Endothelial cell of umbilical vein (primary cell): ENCODE measurements at regions of chr16 and their contacts with region 1.

Region 1: GRCh38 chr16:1983544-1984346 is at the start of gene GFER:
- DNase-seq: peak; percentile 93
- H3K4me3 ChIP-seq: peak within 1 kb of the TSS; percentile 51 to 75 (median 71)
- H3K27ac ChIP-seq: no peak within 1 kb of the TSS
- H3K4me1 ChIP-seq: peaks cover 15% of the 10 kb centered on the region
- H3K27me3 ChIP-seq: peaks cover 37 to 41% of the 10 kb centered on the region in 2 experiments
- CTCF ChIP-seq: peak; percentile 18 to 54
- POLR2A ChIP-seq: peak; percentile 90
- total RNA-seq, gene GFER: 29.9 and 30.5 TPM in 2 replicates

Region 2: DNA sequence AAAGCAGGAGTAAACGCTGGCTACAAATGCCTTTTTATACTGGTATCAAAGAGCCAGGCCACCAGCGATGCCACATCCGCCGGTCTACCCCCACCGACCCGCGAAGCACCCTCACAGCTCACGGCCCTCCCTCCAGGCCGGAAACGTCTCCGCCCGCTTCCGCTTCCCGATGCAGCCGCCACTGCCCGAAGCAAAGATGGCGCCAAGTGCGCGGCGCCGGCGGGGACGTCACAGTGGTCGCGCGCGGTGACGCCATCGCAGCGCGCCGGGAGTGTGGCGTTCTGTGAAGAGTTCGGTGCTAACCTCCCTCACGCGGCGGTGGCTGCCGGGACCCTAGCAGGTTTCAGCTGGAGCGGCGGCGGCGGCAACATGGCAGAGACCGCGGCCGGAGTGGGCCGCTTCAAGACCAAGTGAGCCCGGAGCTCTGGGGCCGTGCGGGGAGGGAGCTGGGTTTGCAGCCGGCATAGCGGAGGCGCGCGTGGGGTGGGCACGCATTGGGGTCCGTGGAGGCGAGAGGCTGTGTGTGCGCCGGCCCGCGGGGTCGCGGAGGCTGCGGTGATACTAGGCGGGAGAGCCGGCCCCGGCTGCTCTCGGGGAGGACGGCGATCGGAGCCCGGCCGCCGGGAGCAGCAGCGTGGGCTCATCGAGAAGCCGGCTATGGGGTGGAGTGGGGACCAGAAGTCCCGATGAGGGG is 11.8 kb before region 1 on chr16 and contains the start of gene TBL3:
- CTCF ChIA-PET with region 1: no interaction called
- POLR2A ChIA-PET with region 1: no interaction called
- dilution Hi-C with region 1: no loop called
- intact Hi-C with region 1: loop called (anchors 1 kb)
- DNase-seq: peak; percentile 95
- H3K4me3 ChIP-seq: peak within 1 kb of the TSS; percentile 59 to 82 (median 62)
- H3K27ac ChIP-seq: peak within 1 kb of the TSS; percentile 40
- H3K4me1 ChIP-seq: peaks cover 4% of the 10 kb centered on the region
- H3K27me3 ChIP-seq: no peaks in the 10 kb centered on the region
- CTCF ChIP-seq: no peak
- POLR2A ChIP-seq: peak; percentile 94
- total RNA-seq, gene TBL3: 42.2 and 42.3 TPM in 2 replicates